Gastrocnemius medialis (tissue), 4 donors: ENCODE measurements at regions of chr9 and their contacts with region 1.

Region 1: GRCh38 chr9:34646211-34647083 is at the start of gene GALT:
- DNase-seq: peak; percentile 85 to 92
- ATAC-seq: peak; percentile 76 to 80
- H3K4me3 ChIP-seq: peak within 1 kb of the TSS; percentile 67 to 85 (median 81)
- H3K27ac ChIP-seq: peak within 1 kb of the TSS; percentile 88 to 94 (median 90)
- H3K4me1 ChIP-seq: peaks cover 30% of the 10 kb centered on the region in 2 donors
- H3K27me3 ChIP-seq: no peaks in the 10 kb centered on the region
- CTCF ChIP-seq: peak; percentile 15 to 65 (median 39)
- POLR2A ChIP-seq: peak; percentile 30 to 55
- total RNA-seq, gene GALT: 8.1 to 23.6 (median 20.0) TPM

Region 2: GRCh38 chr9:34686231-34686630 is 39.8 kb after region 1 on chr9:
- in situ Hi-C with region 1: no loop called
- intact Hi-C with region 1: no loop called
- DNase-seq: no peak
- ATAC-seq: no peak
- H3K4me3 ChIP-seq: no peak overlapping the region
- H3K27ac ChIP-seq: no peak overlapping the region
- H3K4me1 ChIP-seq: no peaks in the 10 kb centered on the region
- H3K27me3 ChIP-seq: no peaks in the 10 kb centered on the region
- CTCF ChIP-seq: no peak
- POLR2A ChIP-seq: no peak

Region 3: GRCh38 chr9:34701769-34702736 is 55.6 kb after region 1 on chr9:
- in situ Hi-C with region 1: loop called in 1 of 4 experiments (anchors 10 kb)
- intact Hi-C with region 1: loop called (anchors 1 kb)
- DNase-seq: peak; percentile 56 to 70
- ATAC-seq: peak; percentile 82 to 93
- H3K4me3 ChIP-seq: peak overlapping the region; percentile 63 to 93 (median 80)
- H3K27ac ChIP-seq: peak overlapping the region; percentile 64 to 71 (median 69)
- H3K4me1 ChIP-seq: peaks cover 4 to 5% of the 10 kb centered on the region in 2 donors
- H3K27me3 ChIP-seq: no peaks in the 10 kb centered on the region
- CTCF ChIP-seq: peak; percentile 87 to 98 (median 89)
- POLR2A ChIP-seq: no peak